IMR-90 (cell line): ENCODE measurements at regions of chr1 and their contacts with region 1.

Region 1: GRCh38 chr1:19109545-19109944 is 100.5 kb downstream of the UBR4 start:
- DNase-seq: no peak
- ATAC-seq: no peak
- H3K4me3 ChIP-seq: no peak overlapping the region
- H3K27ac ChIP-seq: no peak overlapping the region
- H3K4me1 ChIP-seq: no peaks in the 10 kb centered on the region
- H3K27me3 ChIP-seq: no peaks in the 10 kb centered on the region
- CTCF ChIP-seq: no peak
- POLR2A ChIP-seq: no peak
- RAD21 ChIP-seq: no peak

Region 2: DNA sequence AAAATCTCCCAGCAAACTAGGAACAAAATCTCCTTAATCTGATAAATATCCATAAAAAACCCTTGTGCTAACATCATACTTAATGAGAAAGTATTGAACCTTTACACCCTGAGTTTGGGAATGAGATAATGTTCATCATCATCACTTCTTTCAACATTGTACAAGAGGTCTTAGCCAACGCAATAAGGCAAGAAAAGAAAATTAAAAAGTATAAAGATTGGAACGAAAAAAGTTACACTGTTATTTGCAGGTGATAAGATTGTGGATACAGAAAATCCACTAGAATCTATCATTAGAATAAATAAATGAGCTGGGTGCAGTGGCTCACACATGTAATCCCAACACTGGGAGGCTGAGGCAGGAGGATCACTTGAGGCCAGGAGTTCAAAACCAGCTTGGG is 23.8 kb after region 1 on chr1:
- CTCF ChIA-PET with region 1: no interaction called
- POLR2A ChIA-PET with region 1: interaction called, 3 read pairs
- dilution Hi-C with region 1: no loop called
- in situ Hi-C with region 1: no loop called
- intact Hi-C with region 1: loop called (anchors 2 kb)
- DNase-seq: no peak
- ATAC-seq: no peak
- H3K4me3 ChIP-seq: no peak overlapping the region
- H3K27ac ChIP-seq: no peak overlapping the region
- H3K4me1 ChIP-seq: no peaks in the 10 kb centered on the region
- H3K27me3 ChIP-seq: no peaks in the 10 kb centered on the region
- CTCF ChIP-seq: no peak
- POLR2A ChIP-seq: no peak
- RAD21 ChIP-seq: no peak

Region 3: DNA sequence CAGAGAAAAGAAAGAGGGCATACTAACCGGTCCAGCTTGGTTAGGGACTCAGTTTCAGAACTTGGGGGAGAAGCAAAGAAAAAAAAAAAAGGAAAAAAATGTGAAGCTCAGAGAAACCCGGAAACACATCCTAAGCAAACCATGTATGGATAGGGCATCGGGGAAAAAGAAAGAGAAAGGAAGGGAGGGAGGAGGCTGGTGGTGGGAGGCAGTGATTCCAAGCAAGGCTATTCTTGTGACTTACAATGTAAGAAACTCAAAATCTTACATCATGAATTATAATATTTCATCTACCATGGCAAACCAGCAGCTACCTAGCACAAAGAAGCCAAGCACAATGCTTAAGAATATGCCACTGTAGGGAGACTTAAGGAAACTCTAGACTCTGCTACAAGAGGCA is 40.2 kb after region 1 on chr1:
- CTCF ChIA-PET with region 1: no interaction called
- POLR2A ChIA-PET with region 1: no interaction called
- dilution Hi-C with region 1: no loop called
- in situ Hi-C with region 1: loop called (anchors 10 kb)
- intact Hi-C with region 1: loop called (anchors 5 kb)
- DNase-seq: no peak
- ATAC-seq: no peak
- H3K4me3 ChIP-seq: no peak overlapping the region
- H3K27ac ChIP-seq: no peak overlapping the region
- H3K4me1 ChIP-seq: no peaks in the 10 kb centered on the region
- H3K27me3 ChIP-seq: no peaks in the 10 kb centered on the region
- CTCF ChIP-seq: no peak
- POLR2A ChIP-seq: no peak
- RAD21 ChIP-seq: no peak